GM10248 (cell line): ENCODE measurements at regions of chr2 and their contacts with region 1.

Region 1: GRCh38 chr2:24164125-24164973 is 10.5 kb upstream of the FAM228A start:
- DNase-seq: peak; percentile 79
- CTCF ChIP-seq: peak; percentile 81

Region 2: GRCh38 chr2:24153478-24153877 is 10.9 kb before region 1 on chr2:
- CTCF ChIA-PET with region 1: interaction called, 22 read pairs
- POLR2A ChIA-PET with region 1: no interaction called
- DNase-seq: no peak
- CTCF ChIP-seq: no peak

Region 3: GRCh38 chr2:24175631-24176187 is 11.4 kb after region 1 on chr2:
- CTCF ChIA-PET with region 1: interaction called, 27 read pairs
- POLR2A ChIA-PET with region 1: no interaction called
- DNase-seq: no peak
- CTCF ChIP-seq: no peak

Region 4: DNA sequence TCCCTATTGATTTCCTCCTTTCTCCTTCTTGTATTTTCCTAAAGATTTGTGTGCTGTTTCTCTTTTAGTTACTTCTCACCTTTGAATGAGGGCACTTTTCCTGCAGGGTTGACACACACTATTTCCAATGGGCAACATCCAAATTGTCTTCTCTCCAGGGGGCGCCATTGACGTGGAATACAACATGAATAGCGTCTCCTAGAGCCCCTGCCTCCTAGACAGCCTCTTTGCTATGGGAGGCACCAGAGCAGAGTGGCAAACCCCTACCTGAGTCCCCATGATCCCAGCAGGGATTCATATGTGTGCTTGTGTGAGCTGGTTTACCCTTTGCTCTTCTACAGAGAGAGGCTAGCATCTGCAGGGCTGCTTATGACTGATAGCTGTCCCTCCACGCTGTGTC is 257.3 kb after region 1 on chr2:
- CTCF ChIA-PET with region 1: no interaction called
- POLR2A ChIA-PET with region 1: no interaction called
- DNase-seq: peak; percentile 52
- CTCF ChIP-seq: peak; percentile 48